ENCODE measurements at regions of chr14 and their contacts with region 1.

Region 1: GRCh38 chr14:63543000-63543825 is at the start of gene PPP2R5E:
- DNase-seq: peak; percentile 97 to 99 (median 98)
- H3K4me3 ChIP-seq: peak within 1 kb of the TSS; percentile 68 to 83
- H3K4me3 Mint-ChIP-seq: peak within 1 kb of the TSS; percentile 97 to 99 (median 98)
- H3K27ac ChIP-seq: peak within 1 kb of the TSS; percentile 91
- H3K27ac Mint-ChIP-seq: peak within 1 kb of the TSS; percentile 92 to 98 (median 97)
- H3K4me1 ChIP-seq: peaks cover 26% of the 10 kb centered on the region
- H3K4me1 Mint-ChIP-seq: peaks cover 26 to 48% (median 33%) of the 10 kb centered on the region in 4 donors
- H3K27me3 ChIP-seq: no peaks in the 10 kb centered on the region
- H3K27me3 Mint-ChIP-seq: peaks cover 0 to 1% of the 10 kb centered on the region in 2 donors
- total RNA-seq, gene PPP2R5E: 36.2 to 38.0 TPM

Region 2: GRCh38 chr14:63650256-63650952 is 107.2 kb after region 1 on chr14:
- CTCF ChIA-PET with region 1: interaction called, 4 read pairs
- POLR2A ChIA-PET with region 1: interaction called, 20 read pairs
- intact Hi-C with region 1: no loop called
- DNase-seq: peak; percentile 72 to 79 (median 74)
- H3K4me3 ChIP-seq: peak overlapping the region in 1 of 2 donors; percentile 1
- H3K4me3 Mint-ChIP-seq: peak overlapping the region in 7 of 8 donors; percentile 66 to 80 (median 77)
- H3K27ac ChIP-seq: peak overlapping the region; percentile 56
- H3K27ac Mint-ChIP-seq: peak overlapping the region; percentile 92 to 100 (median 97)
- H3K4me1 ChIP-seq: peaks cover 41% of the 10 kb centered on the region
- H3K4me1 Mint-ChIP-seq: peaks cover 19 to 39% (median 29%) of the 10 kb centered on the region in 4 donors
- H3K27me3 ChIP-seq: no peaks in the 10 kb centered on the region
- H3K27me3 Mint-ChIP-seq: no peaks in the 10 kb centered on the region

Region 3: DNA sequence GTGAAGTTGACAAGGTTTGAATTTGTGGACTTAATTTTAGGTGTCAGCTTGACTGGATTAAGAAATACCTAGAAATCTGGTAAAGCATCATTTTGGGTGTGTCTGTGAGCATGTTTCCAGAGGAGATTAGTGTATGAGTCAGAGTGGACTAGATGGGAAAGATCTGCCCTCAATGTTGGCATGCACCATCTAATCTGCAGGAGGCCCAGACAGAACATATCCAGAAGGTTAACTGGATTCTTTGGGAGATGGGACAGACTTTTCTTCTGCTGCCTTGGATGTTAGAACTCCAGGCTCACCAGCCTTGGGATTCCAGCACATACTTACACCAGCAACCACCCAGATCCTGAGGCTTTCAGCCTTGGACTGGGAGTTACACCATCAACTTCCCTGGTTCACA is 170.6 kb after region 1 on chr14:
- CTCF ChIA-PET with region 1: no interaction called
- POLR2A ChIA-PET with region 1: no interaction called
- intact Hi-C with region 1: no loop called
- DNase-seq: no peak
- H3K4me3 ChIP-seq: no peak overlapping the region
- H3K4me3 Mint-ChIP-seq: peak overlapping the region in 1 of 8 donors; percentile 20
- H3K27ac ChIP-seq: no peak overlapping the region
- H3K27ac Mint-ChIP-seq: peak overlapping the region in 3 of 7 donors; percentile 40 to 49 (median 40)
- H3K4me1 ChIP-seq: peaks cover 24% of the 10 kb centered on the region
- H3K4me1 Mint-ChIP-seq: peaks cover 23 to 32% (median 24%) of the 10 kb centered on the region in 4 donors
- H3K27me3 ChIP-seq: no peaks in the 10 kb centered on the region
- H3K27me3 Mint-ChIP-seq: no peaks in the 10 kb centered on the region

Region 4: GRCh38 chr14:64387694-64388532 is 844.7 kb after region 1 on chr14 and contains the start of gene MTHFD1:
- CTCF ChIA-PET with region 1: no interaction called
- POLR2A ChIA-PET with region 1: interaction called, 3 read pairs
- intact Hi-C with region 1: loop called (anchors 5 kb)
- DNase-seq: peak; percentile 95 to 97 (median 96)
- H3K4me3 ChIP-seq: peak within 1 kb of the TSS; percentile 68 to 83
- H3K4me3 Mint-ChIP-seq: peak within 1 kb of the TSS; percentile 94 to 99 (median 96)
- H3K27ac ChIP-seq: peak within 1 kb of the TSS; percentile 60
- H3K27ac Mint-ChIP-seq: peak within 1 kb of the TSS; percentile 91 to 99 (median 97)
- H3K4me1 ChIP-seq: peaks cover 36% of the 10 kb centered on the region
- H3K4me1 Mint-ChIP-seq: peaks cover 17 to 51% (median 29%) of the 10 kb centered on the region in 4 donors
- H3K27me3 ChIP-seq: no peaks in the 10 kb centered on the region
- H3K27me3 Mint-ChIP-seq: no peaks in the 10 kb centered on the region
- total RNA-seq, gene MTHFD1: 27.9 to 29.8 TPM

Region 5: GRCh38 chr14:64928239-64929013 is 1385.2 kb after region 1 on chr14:
- CTCF ChIA-PET with region 1: no interaction called
- POLR2A ChIA-PET with region 1: no interaction called
- intact Hi-C with region 1: loop called (anchors 5 kb)
- DNase-seq: peak in 4 of 5 donors; percentile 42 to 63 (median 55)
- H3K4me3 ChIP-seq: peak overlapping the region in 1 of 2 donors; percentile 30
- H3K4me3 Mint-ChIP-seq: no peak overlapping the region
- H3K27ac ChIP-seq: peak overlapping the region; percentile 56
- H3K27ac Mint-ChIP-seq: no peak overlapping the region
- H3K4me1 ChIP-seq: peaks cover 86% of the 10 kb centered on the region
- H3K4me1 Mint-ChIP-seq: peaks cover 21 to 38% (median 30%) of the 10 kb centered on the region in 4 donors
- H3K27me3 ChIP-seq: no peaks in the 10 kb centered on the region
- H3K27me3 Mint-ChIP-seq: no peaks in the 10 kb centered on the region